ENCODE measurements at regions of chr4 and their contacts with region 1.

Region 1: GRCh38 chr4:102826890-102827673 is at the start of gene UBE2D3:
- DNase-seq: peak; percentile 86
- H3K4me3 ChIP-seq: peak within 1 kb of the TSS; percentile 78 to 99 (median 94)
- H3K27ac ChIP-seq: peak within 1 kb of the TSS; percentile 99 to 100 (median 100)
- H3K4me1 ChIP-seq: peaks cover 10 to 43% (median 28%) of the 10 kb centered on the region in 3 donors
- H3K27me3 ChIP-seq: no peaks in the 10 kb centered on the region
- CTCF ChIP-seq: no peak
- POLR2A ChIP-seq: peak in 3 of 4 donors; percentile 27 to 93 (median 75)
- total RNA-seq, gene UBE2D3: 278 to 377 (median 304) TPM

Region 2: GRCh38 chr4:102500696-102501446 is 326.2 kb before region 1 on chr4 and contains the start of gene NFKB1:
- intact Hi-C with region 1: loop called (anchors 5 kb)
- DNase-seq: peak; percentile 8
- H3K4me3 ChIP-seq: peak within 1 kb of the TSS; percentile 80 to 97 (median 96)
- H3K27ac ChIP-seq: peak within 1 kb of the TSS; percentile 99 to 100 (median 99)
- H3K4me1 ChIP-seq: peaks cover 11 to 66% (median 18%) of the 10 kb centered on the region in 3 donors
- H3K27me3 ChIP-seq: no peaks in the 10 kb centered on the region
- CTCF ChIP-seq: peak in 1 of 6 experiments; percentile 4
- POLR2A ChIP-seq: peak in 2 of 4 donors; percentile 26 to 50
- total RNA-seq, gene NFKB1: 33.5 to 47.5 (median 41.4) TPM

Region 3: DNA sequence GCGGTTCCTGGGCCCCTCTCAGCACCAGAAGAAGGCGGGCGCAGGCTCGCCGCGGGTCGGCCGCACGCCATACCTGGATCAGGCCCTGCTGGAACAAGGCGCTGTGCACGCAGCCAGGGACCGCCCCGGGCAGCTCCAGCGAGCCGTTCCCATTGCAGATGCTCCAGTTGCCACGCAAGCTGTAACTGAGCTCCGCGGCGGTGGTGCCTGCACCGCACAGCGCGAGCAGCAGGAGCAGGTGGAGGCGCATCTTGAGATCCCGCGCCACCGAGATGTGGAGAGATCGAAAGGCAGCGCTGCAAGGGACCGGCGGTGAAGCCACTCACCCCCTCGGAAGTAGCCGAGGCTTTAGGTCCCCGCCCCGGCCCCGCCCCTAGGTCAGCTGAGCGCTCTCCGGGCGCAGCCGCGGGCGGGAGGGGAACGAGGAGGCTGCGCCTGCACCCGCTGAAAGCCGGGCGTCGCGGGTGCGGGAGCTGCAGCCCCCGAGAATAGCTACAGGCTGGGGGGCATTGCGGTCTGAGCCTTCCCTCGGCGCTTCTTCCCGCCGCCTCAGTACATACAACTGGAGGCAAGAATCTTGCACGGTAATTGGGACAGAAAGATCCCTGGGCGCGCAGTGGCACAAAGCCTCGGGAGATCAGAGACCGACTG is 66.3 kb before region 1 on chr4 and contains the start of gene MANBA:
- intact Hi-C with region 1: loop called (anchors 5 kb)
- DNase-seq: peak; percentile 22
- H3K4me3 ChIP-seq: peak within 1 kb of the TSS; percentile 62 to 95 (median 90)
- H3K27ac ChIP-seq: peak within 1 kb of the TSS; percentile 65 to 93 (median 86)
- H3K4me1 ChIP-seq: peaks cover 0 to 18% (median 11%) of the 10 kb centered on the region in 3 donors
- H3K27me3 ChIP-seq: no peaks in the 10 kb centered on the region
- CTCF ChIP-seq: no peak
- POLR2A ChIP-seq: peak in 3 of 4 donors; percentile 14 to 82 (median 48)
- total RNA-seq, gene MANBA: 10.4 to 21.7 (median 15.1) TPM

Region 4: GRCh38 chr4:102868781-102869568 is 41.9 kb after region 1 on chr4 and contains the start of gene CISD2:
- intact Hi-C with region 1: loop called (anchors 5 kb)
- DNase-seq: peak; percentile 66
- H3K4me3 ChIP-seq: peak within 1 kb of the TSS; percentile 52 to 83 (median 71)
- H3K27ac ChIP-seq: peak within 1 kb of the TSS; percentile 94 to 99 (median 96)
- H3K4me1 ChIP-seq: peaks cover 5 to 30% (median 8%) of the 10 kb centered on the region in 3 donors
- H3K27me3 ChIP-seq: no peaks in the 10 kb centered on the region
- CTCF ChIP-seq: peak in 1 of 6 experiments; percentile 4
- POLR2A ChIP-seq: peak in 3 of 4 donors; percentile 70 to 84 (median 72)
- total RNA-seq, gene CISD2: 5.6 to 22.4 (median 11.0) TPM

Measured in esophagus squamous epithelium (tissue), 5 donors.